Heart right ventricle (tissue), 16 donors: ENCODE measurements at regions of chr1 and their contacts with region 1.

Region 1: GRCh38 chr1:159872881-159873280 is 10.4 kb upstream of the VSIG8 start:
- DNase-seq: no peak
- ATAC-seq: no peak
- H3K4me3 ChIP-seq: no peak overlapping the region
- H3K27ac ChIP-seq: no peak overlapping the region
- H3K4me1 ChIP-seq: peaks cover under 1 to 19% (median 8%) of the 10 kb centered on the region in 9 donors
- H3K27me3 ChIP-seq: peaks cover 0 to 23% (median 5%) of the 10 kb centered on the region in 7 donors
- CTCF ChIP-seq: no peak

Region 2: DNA sequence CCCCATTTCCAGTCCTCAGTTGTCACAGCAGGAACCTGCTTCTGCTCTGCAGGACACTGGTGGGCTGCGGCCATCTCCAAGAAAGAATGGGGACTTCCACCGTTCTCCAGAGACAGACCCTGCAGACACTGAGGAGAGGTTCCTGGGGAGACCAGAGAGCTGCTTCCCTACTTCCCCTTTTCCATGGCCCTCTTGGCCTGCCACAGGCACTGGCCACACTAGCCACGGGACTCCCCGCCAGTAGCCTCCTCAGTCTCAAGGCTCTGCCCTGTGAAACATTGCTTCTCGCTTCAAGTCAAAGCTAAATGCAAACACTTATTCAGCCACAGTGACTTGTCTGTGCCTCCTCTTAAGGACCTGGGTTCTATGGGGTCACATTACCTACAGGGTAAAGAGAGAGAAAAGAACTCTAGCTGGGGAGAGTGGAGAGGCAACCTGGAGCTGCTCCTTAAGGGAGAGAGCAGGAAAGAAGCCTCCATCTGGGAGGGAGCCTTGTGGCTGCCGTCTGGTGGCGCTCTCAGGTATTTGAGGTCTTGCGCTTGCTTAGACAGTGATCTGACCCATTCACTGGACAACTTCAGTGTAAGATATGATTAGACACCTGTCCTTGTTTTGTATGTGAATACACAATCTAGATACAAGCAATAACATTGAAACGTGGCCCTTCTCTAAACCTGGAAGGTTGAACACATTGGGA is 51.6 kb before region 1 on chr1:
- intact Hi-C with region 1: loop called in 1 of 10 experiments (anchors 5 kb)
- DNase-seq: no peak
- ATAC-seq: peak in 4 of 8 donors; percentile 33 to 79 (median 54)
- H3K4me3 ChIP-seq: no peak overlapping the region
- H3K27ac ChIP-seq: no peak overlapping the region
- H3K4me1 ChIP-seq: peaks cover 0 to 29% (median 0%) of the 10 kb centered on the region in 9 donors
- H3K27me3 ChIP-seq: peaks cover 0 to 30% (median 13%) of the 10 kb centered on the region in 7 donors
- CTCF ChIP-seq: no peak